ENCODE measurements at regions of chr1 and their contacts with region 1.

Region 1: DNA sequence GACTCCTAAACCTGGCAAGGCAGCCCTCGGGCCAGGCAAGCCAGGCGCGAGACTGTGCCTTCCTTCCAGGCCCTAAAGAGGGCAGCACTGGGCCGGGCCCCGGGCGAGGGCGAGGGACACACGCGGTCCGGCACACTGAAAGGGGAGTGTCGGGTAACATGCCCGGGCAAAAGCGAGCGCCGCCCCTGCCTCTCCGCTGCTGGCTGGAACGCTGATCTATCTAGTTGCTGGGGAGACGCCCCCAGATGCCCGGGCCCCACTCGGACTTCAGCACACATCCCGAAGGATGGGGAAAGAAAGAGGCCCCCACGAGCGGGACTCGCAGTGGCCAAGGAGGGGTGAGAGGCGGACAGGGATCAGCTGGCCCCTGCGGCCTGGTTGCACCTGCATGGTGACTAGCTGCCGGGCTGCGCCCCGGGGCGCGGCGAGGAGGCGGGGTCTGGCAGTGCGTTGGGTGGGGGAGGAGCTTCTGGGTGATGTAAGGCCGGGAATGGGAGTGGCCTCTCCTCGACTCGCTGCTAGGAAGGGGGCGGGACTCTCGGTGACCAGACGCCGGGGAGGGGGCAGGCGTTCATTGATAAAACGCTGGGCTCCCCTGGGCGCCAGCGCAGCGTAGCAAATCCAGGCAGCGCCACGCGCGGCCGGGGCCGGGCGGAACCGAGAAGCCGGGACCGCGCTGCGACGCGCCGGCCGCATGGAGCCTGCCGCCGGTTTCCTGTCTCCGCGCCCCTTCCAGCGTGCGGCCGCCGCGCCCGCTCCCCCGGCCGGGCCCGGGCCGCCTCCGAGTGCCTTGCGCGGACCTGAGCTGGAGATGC is at the start of gene PLK3:
- DNase-seq: peak; percentile 97 to 99 (median 99)
- H3K4me3 ChIP-seq: peak within 1 kb of the TSS; percentile 60 to 99 (median 76)
- H3K4me3 Mint-ChIP-seq: peak within 1 kb of the TSS; percentile 94 to 98
- H3K27ac ChIP-seq: peak within 1 kb of the TSS; percentile 90 to 95
- H3K27ac Mint-ChIP-seq: peak within 1 kb of the TSS; percentile 98 to 100 (median 99)
- H3K4me1 ChIP-seq: peaks cover 29 to 38% of the 10 kb centered on the region in 2 donors
- H3K4me1 Mint-ChIP-seq: peaks cover 20% of the 10 kb centered on the region
- H3K27me3 ChIP-seq: no peaks in the 10 kb centered on the region
- H3K27me3 Mint-ChIP-seq: peaks cover 1 to 9% (median 4%) of the 10 kb centered on the region in 3 donors
- CTCF ChIP-seq: peak; percentile 90
- polyA plus RNA-seq, gene PLK3: 15.8 to 285 (median 28.1) TPM

Region 2: GRCh38 chr1:44417351-44418021 is 382.5 kb before region 1 on chr1:
- intact Hi-C with region 1: no loop called
- DNase-seq: peak; percentile 60 to 67 (median 66)
- H3K4me3 ChIP-seq: peak overlapping the region; percentile 28 to 77 (median 42)
- H3K4me3 Mint-ChIP-seq: peak overlapping the region; percentile 88 to 97
- H3K27ac ChIP-seq: no peak overlapping the region
- H3K27ac Mint-ChIP-seq: no peak overlapping the region
- H3K4me1 ChIP-seq: peaks cover 15 to 17% of the 10 kb centered on the region in 2 donors
- H3K4me1 Mint-ChIP-seq: peaks cover 25% of the 10 kb centered on the region
- H3K27me3 ChIP-seq: peaks cover 36 to 52% of the 10 kb centered on the region in 2 donors
- H3K27me3 Mint-ChIP-seq: peaks cover 28 to 34% (median 31%) of the 10 kb centered on the region in 3 donors
- CTCF ChIP-seq: no peak

Region 3: GRCh38 chr1:44819608-44820327 is 19.8 kb after region 1 on chr1:
- intact Hi-C with region 1: loop called (anchors 2 kb)
- DNase-seq: peak; percentile 84 to 87 (median 87)
- H3K4me3 ChIP-seq: peak overlapping the region; percentile 68 to 79 (median 73)
- H3K4me3 Mint-ChIP-seq: peak overlapping the region; percentile 90 to 97
- H3K27ac ChIP-seq: peak overlapping the region; percentile 95 to 100
- H3K27ac Mint-ChIP-seq: peak overlapping the region; percentile 99 to 100 (median 100)
- H3K4me1 ChIP-seq: peaks cover 36% of the 10 kb centered on the region in 2 donors
- H3K4me1 Mint-ChIP-seq: peaks cover 49% of the 10 kb centered on the region
- H3K27me3 ChIP-seq: no peaks in the 10 kb centered on the region
- H3K27me3 Mint-ChIP-seq: peaks cover 0 to 1% (median 0%) of the 10 kb centered on the region in 3 donors
- CTCF ChIP-seq: no peak

Region 4: GRCh38 chr1:44826375-44827196 is 26.6 kb after region 1 on chr1:
- intact Hi-C with region 1: loop called in 1 of 2 experiments (anchors 5 kb)
- DNase-seq: peak; percentile 67 to 82 (median 81)
- H3K4me3 ChIP-seq: peak overlapping the region in 1 of 3 experiments; percentile 68
- H3K4me3 Mint-ChIP-seq: peak overlapping the region; percentile 66 to 83
- H3K27ac ChIP-seq: peak overlapping the region; percentile 29 to 67
- H3K27ac Mint-ChIP-seq: peak overlapping the region; percentile 67 to 91 (median 81)
- H3K4me1 ChIP-seq: peaks cover 30 to 44% of the 10 kb centered on the region in 2 donors
- H3K4me1 Mint-ChIP-seq: peaks cover 30% of the 10 kb centered on the region
- H3K27me3 ChIP-seq: no peaks in the 10 kb centered on the region
- H3K27me3 Mint-ChIP-seq: peaks cover 0 to 5% (median 0%) of the 10 kb centered on the region in 3 donors
- CTCF ChIP-seq: no peak

Measured in CD14-positive monocyte (primary cell).